GM10248 (cell line): ENCODE measurements at regions of chr9 and their contacts with region 1.

Region 1: DNA sequence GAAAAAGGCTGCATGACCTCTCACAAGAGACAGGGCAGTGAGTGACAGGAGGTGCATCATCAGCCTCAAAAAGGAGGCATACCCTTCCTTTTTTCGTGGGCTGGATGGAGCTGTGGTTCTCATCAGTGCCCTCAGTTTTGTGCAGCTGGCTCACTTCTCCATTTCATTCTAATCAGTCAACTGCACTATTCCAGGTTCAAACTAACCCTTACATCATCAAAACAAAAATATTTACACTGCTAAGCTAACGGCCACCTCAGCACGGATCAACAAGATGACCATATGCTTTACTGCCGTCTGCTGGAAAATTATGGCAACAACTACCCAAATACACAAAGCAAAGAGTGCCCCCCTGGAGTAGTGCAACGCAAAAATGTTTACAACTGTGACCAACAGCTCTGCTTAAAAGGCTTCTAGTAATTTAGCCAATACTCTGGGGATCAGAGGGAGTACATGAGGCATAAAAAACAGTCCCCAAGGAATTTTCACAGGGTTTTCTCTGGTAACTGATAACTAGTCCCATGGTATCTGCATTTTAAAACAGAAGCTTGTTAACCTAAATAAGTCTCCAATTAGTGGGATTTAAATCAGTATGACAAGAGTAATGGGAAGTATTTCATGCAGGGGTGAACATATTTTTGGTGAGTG is 10.8 kb downstream of the KCNV2 start:
- DNase-seq: peak; percentile 22
- CTCF ChIP-seq: peak; percentile 61

Region 2: GRCh38 chr9:2336055-2336454 is 392.0 kb before region 1 on chr9:
- CTCF ChIA-PET with region 1: interaction called, 14 read pairs
- POLR2A ChIA-PET with region 1: no interaction called
- DNase-seq: no peak
- CTCF ChIP-seq: no peak

Region 3: GRCh38 chr9:2697492-2697891 is 30.6 kb before region 1 on chr9:
- CTCF ChIA-PET with region 1: interaction called, 10 read pairs
- POLR2A ChIA-PET with region 1: no interaction called
- DNase-seq: no peak
- CTCF ChIP-seq: no peak

Region 4: GRCh38 chr9:2740616-2741015 is 12.5 kb after region 1 on chr9:
- CTCF ChIA-PET with region 1: interaction called, 33 read pairs
- POLR2A ChIA-PET with region 1: no interaction called
- DNase-seq: no peak
- CTCF ChIP-seq: no peak

Region 5: GRCh38 chr9:2785060-2785950 is 57.2 kb after region 1 on chr9:
- CTCF ChIA-PET with region 1: no interaction called
- POLR2A ChIA-PET with region 1: no interaction called
- DNase-seq: no peak
- CTCF ChIP-seq: no peak